AG04449 (cell line): ENCODE measurements at regions of chr9 and their contacts with region 1.

Region 1: DNA sequence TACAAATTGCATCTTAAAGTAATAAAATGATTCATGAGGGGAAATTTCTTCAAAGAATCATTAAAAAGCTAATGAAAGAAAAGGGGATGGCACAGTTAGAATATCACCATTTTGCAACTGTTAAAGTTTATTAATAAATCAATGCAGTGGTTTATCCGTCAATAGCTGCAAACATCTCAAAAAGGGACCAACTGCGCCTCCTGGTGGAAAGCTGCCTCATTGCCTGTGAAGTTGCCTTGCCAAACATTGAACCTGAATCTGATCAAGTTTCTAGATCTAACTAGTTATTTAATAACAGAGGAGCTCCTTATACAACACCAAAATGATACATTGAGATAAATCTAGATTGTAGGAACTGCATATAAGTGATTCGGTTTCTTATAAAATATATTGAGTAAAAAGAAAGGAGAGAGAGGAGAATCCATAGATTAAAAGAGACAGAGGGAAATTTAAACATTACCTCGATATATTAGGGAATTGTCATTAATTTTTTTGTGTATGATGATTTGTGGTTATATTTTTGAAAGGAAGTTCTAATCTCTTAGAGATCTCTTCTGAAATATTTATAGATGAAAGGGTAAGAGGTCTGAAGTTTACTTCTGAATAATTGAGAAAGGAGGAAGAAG is 6.9 kb upstream of the NDUFB6 start:
- DNase-seq: no peak
- H3K4me3 ChIP-seq: no peak overlapping the region
- CTCF ChIP-seq: peak; percentile 88

Region 2: DNA sequence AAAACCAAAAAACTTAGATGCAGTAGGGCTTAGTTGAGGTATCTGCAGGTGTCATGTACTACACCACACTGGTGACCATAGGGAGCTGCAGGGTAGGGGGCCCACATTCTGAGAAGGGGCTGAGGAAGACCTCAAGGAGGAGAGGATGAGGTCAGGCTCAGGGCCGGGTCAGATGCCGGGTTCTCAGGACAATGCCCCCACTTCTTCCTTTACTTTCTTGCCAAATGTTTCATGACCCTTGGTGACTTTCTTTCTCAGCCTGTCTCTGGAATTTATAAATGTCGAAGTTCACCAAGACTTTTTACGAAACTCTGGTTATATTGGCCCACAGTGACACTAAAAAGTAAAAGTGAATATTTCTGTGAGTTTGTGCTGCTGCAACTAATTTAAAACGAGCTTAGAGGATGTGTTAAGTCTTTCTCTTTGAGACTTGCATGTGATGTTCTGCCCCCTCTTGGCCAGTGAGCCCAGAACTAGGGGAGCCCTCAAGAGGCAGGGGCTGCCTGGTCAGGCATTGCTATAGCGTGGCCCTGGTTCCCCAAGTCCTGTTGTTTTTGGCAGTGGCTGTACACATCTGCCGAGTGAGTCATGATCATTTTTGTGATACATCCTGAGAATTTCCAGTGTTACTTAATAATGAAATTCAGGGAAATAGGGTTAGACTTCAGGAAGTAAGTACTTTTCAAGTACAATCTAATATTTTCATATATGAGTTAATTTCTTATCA is 184.2 kb before region 1 on chr9:
- CTCF ChIA-PET with region 1: interaction called, 52 read pairs
- POLR2A ChIA-PET with region 1: no interaction called
- DNase-seq: peak; percentile 76
- H3K4me3 ChIP-seq: no peak overlapping the region
- CTCF ChIP-seq: peak; percentile 57

Region 3: DNA sequence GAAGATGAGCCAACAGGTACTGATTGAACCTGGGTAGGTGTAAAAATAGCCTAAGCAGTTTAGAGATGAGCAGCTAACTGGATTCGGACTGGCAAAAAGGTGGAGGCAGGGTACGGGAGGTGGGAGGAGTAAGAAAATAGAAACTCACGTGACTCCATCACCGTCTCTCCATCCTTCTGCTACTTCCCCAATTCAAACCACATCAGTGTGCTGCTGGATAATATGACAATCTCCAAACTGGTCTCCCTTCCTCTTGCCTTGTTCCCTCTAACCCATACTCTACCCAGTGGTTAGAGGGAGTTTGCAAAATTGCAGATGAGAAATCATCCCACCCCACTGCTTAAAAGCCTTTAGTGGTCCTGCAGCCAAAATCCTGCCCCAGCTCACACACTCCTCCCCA is 96.5 kb before region 1 on chr9:
- CTCF ChIA-PET with region 1: no interaction called
- POLR2A ChIA-PET with region 1: no interaction called
- DNase-seq: no peak
- H3K4me3 ChIP-seq: no peak overlapping the region
- CTCF ChIP-seq: no peak

Region 4: DNA sequence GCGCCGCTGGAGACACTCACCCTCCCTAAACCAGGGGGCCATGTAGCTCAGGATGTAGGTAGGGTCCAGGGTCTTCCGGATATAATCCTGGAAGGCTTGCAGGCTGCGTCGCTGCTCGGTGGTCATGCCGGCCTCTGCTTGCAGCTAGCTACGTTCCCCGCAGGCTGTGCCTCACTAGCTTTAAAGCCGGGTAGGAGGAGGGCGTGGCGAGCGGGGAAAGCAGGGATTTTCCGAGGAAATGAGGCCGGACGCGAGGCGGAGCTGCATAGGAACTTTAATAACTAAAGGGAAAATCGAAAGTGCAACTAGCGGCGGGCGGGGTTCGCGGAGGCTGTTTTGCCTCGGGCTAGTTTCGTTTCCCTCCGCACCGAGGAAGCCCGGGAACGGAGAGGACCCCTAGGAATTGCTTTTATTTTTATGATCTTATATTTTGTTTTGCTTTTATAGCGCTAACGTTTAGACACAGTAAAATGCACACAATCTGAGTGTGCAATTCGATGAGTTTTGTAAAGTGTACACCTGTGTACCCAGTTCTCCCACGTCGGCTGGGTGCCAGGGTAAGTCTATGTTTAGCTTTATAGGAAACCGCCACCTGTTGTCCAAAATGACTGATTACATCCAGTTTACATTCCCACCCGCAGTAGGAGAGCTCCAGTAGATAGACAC is 53.6 kb before region 1 on chr9 and contains the start of gene RIGI:
- CTCF ChIA-PET with region 1: interaction called, 25 read pairs
- POLR2A ChIA-PET with region 1: no interaction called
- DNase-seq: peak; percentile 46
- H3K4me3 ChIP-seq: peak within 1 kb of the TSS; percentile 76
- CTCF ChIP-seq: peak; percentile 25

Region 5: DNA sequence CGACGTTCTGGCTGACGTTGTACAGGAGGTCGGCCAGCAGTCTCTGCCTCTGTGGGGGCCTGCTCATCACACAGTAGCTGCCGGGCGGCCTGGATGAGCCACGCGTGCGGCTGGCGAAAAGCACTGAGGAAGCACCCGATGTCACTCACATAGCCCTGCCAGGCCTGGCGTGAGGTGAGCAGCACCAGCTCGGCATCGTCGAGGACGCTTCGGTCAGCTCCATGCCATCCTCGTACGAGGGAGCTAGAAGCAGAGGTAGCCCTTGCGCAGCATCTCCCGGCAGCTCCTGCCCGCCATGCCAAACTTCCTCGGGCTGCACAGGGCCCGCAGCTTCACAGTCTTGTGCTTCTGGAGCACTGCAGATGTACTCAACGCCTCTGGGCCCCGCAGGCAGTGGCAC is 13.0 kb before region 1 on chr9:
- CTCF ChIA-PET with region 1: interaction called, 33 read pairs
- POLR2A ChIA-PET with region 1: no interaction called
- DNase-seq: no peak
- H3K4me3 ChIP-seq: no peak overlapping the region
- CTCF ChIP-seq: no peak

Region 6: DNA sequence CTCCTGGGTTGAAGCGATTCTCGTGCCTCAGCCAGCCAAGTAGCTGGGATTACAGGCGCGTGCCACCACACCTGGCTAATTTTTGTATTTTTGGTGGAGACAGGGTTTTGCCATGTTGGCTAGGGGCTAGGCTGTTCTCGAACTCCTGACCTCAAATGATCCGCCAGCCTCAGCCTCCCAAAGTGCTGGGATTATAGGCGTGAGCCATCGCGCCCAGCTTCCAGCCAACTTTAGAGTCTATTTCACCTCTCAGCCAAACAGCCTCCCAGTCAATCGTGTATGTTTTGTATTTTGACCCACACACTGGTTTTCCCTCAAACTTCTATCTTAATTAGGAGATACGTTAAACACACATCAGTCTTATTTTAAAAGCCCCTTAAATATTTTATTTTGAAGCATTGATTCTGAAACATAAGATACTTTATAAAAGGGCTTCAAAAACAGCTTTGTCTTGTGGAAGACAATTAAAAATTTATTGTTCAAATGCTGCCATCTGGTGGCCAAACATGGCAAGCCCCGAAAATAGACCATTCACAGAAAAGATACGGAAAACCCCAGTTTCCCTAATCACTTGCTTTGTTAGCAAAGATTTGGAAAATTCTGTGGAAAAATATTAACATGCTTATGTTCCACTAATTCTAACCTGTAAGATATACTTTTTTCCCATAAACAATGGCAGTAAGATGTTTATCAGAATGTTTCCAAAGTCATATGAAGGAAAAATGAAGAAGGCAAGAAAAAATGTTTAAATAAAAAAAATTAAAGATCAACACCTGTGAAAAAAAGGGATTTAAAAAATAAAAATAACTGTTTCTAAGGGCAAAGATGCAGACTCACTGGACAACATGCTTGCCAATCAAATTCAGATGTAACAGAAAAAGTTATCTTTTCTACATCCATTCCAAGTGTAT is 388.5 kb after region 1 on chr9:
- CTCF ChIA-PET with region 1: interaction called, 928 read pairs
- POLR2A ChIA-PET with region 1: no interaction called
- DNase-seq: no peak
- H3K4me3 ChIP-seq: no peak overlapping the region
- CTCF ChIP-seq: peak; percentile 51